ENCODE measurements at regions of chr7 and their contacts with region 1.

Region 1: GRCh38 chr7:106041140-106041717 is 70.9 kb downstream of the SYPL1 start:
- DNase-seq: peak; percentile 24 to 47 (median 43)
- H3K4me3 ChIP-seq: no peak overlapping the region
- H3K4me3 Mint-ChIP-seq: peak overlapping the region in 1 of 2 donors; percentile 44
- H3K27ac ChIP-seq: no peak overlapping the region
- H3K27ac Mint-ChIP-seq: peak overlapping the region in 1 of 7 donors; percentile 56
- H3K4me1 ChIP-seq: no peaks in the 10 kb centered on the region
- H3K4me1 Mint-ChIP-seq: peaks cover 10% of the 10 kb centered on the region
- H3K27me3 ChIP-seq: peaks cover 0 to 16% of the 10 kb centered on the region in 2 donors
- H3K27me3 Mint-ChIP-seq: peaks cover 12 to 31% (median 21%) of the 10 kb centered on the region in 3 donors
- CTCF ChIP-seq: peak; percentile 90

Region 2: DNA sequence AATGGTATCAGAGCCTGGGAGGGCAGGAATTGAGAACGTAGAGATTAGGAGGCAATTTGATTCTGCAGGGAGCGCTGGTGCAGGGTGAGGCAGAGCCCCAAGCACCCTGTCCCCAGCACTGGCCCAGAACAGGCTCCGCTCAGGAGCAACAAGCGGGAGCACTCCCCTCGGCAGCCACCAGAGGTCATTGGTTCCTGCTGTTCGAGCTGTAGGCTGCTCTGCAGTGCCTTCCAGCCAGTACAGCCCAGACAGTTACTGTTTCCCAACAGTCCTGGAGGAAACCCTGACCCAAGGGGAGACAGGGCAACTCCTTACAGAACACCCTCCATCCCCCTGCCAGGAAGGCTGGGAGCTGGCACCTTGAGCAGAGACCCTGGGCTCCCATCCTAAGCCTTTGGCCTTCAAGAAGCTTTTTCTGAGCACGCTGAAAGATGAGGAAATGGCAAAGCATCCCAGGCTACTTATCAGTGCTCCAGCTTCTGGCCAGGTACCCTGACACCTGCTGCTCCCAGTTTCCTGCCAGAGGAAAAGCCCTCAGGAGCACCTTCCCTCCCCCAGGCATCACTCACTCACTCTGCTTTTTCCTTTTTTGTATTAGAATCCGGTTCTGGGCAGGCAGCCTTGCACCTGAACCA is 388.8 kb before region 1 on chr7:
- intact Hi-C with region 1: loop called (anchors 2 to 5 kb)
- DNase-seq: peak; percentile 18 to 44 (median 29)
- H3K4me3 ChIP-seq: no peak overlapping the region
- H3K4me3 Mint-ChIP-seq: no peak overlapping the region
- H3K27ac ChIP-seq: no peak overlapping the region
- H3K27ac Mint-ChIP-seq: peak overlapping the region in 1 of 7 donors; percentile 15
- H3K4me1 ChIP-seq: no peaks in the 10 kb centered on the region
- H3K4me1 Mint-ChIP-seq: no peaks in the 10 kb centered on the region
- H3K27me3 ChIP-seq: no peaks in the 10 kb centered on the region
- H3K27me3 Mint-ChIP-seq: no peaks in the 10 kb centered on the region
- CTCF ChIP-seq: peak; percentile 80

Region 3: DNA sequence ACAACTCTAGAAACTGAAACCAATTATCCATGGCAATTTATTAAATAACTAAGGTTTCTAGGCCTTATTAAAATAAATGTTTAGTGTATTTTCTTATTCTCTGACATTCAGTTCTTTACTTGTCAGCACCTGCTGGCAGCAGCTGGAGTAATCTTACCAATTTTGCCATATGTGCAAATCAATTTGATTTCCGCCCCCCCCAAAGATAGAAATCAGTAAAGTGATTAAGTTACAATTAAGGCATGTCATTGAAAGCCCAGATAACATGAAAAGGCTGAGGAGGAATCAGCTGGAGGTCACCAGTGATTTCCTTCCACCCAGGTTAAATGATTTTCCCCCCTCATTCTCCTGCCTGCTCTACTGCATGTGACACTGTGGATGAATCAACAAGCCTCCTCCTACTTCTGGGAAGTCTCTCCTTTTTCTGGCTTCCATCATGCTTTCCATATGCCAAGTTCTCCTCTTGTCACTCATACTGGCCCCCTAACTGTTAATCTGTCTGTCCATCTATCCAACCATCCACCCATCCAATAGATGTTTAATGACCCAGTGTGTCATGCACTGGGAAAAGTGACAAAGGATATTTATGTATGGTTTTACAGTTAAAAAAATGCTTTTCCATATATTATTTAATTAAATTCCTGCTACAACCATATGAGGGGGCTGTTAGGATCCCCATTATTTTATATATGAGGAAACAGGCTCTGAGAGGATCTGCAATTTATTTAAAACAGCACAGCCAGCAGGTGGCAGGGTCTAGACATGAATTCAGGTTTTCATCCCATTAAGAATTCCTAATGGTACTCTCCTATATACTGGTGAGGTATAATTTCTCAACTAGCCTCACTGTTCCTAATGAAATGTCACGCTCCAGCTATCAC is 281.3 kb before region 1 on chr7:
- intact Hi-C with region 1: loop called (anchors 10 kb)
- DNase-seq: peak in 2 of 3 donors; percentile 20 to 28
- H3K4me3 ChIP-seq: no peak overlapping the region
- H3K4me3 Mint-ChIP-seq: no peak overlapping the region
- H3K27ac ChIP-seq: no peak overlapping the region
- H3K27ac Mint-ChIP-seq: no peak overlapping the region
- H3K4me1 ChIP-seq: no peaks in the 10 kb centered on the region
- H3K4me1 Mint-ChIP-seq: no peaks in the 10 kb centered on the region
- H3K27me3 ChIP-seq: no peaks in the 10 kb centered on the region
- H3K27me3 Mint-ChIP-seq: peaks cover 0 to 2% (median 0%) of the 10 kb centered on the region in 3 donors
- CTCF ChIP-seq: peak; percentile 74

Region 4: GRCh38 chr7:106112117-106112971 is 71.1 kb after region 1 on chr7 and contains the start of gene SYPL1:
- intact Hi-C with region 1: no loop called
- DNase-seq: peak; percentile 90 to 92 (median 90)
- H3K4me3 ChIP-seq: peak within 1 kb of the TSS; percentile 72 to 87 (median 82)
- H3K4me3 Mint-ChIP-seq: peak within 1 kb of the TSS; percentile 86 to 94
- H3K27ac ChIP-seq: peak within 1 kb of the TSS; percentile 84 to 88
- H3K27ac Mint-ChIP-seq: peak within 1 kb of the TSS; percentile 86 to 98 (median 90)
- H3K4me1 ChIP-seq: peaks cover 16 to 38% of the 10 kb centered on the region in 2 donors
- H3K4me1 Mint-ChIP-seq: peaks cover 42% of the 10 kb centered on the region
- H3K27me3 ChIP-seq: no peaks in the 10 kb centered on the region
- H3K27me3 Mint-ChIP-seq: peaks cover 0 to 3% (median 2%) of the 10 kb centered on the region in 3 donors
- CTCF ChIP-seq: no peak
- polyA plus RNA-seq, gene SYPL1: 22.3 to 82.1 (median 64.7) TPM